ENCODE measurements at regions of chr5 and their contacts with region 1.

Region 1: DNA sequence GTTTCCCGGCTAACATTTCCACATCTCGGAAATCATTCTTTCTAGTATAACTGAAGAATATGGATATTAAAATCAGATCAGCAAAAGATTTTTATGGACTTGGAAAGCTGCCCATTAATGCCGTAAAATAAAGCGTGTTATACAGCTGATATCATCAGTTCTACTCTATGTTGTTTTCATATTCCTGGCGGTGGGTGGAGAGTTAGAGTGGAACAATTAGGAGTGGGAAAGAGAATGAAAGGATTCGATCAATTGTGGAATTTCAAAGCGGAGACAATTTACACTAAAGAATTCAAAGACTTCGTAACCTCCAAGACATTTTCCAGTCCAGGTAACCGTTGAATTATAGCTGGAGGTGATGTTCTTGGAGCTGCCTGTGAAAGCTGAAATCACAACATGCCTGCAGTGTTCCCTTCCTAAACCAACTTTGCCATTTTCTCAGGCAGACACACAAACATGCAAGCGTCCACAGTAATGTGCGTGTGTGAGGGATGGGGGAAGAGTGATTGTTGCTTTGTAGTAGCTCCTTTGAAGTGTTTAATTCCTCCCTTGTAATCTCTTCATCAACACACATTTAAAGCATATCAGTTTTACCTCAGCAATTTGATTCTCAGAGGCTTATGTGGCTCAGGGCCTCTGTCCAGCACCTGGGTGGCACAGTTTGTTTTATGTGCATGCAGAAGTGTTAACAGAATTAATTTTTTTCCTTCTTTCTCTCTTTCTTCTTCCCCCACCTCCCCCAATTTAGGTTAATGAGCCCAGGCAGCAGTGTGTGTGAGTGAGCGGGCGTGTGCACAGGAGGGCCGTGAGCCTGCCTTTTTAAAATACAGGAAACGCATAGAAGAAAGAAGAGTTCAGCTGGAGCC is 544.1 kb downstream of the RAB3C start:
- DNase-seq: no peak
- ATAC-seq: no peak

Region 2: GRCh38 chr5:59039296-59040023 is 87.5 kb before region 1 on chr5:
- intact Hi-C with region 1: loop called (anchors 1 kb)
- DNase-seq: peak; percentile 96
- ATAC-seq: peak; percentile 73

Measured in Right ventricle myocardium inferior (tissue), 1 donor.